Activated CD8-positive, alpha-beta T cell treated with anti-CD3 and anti-CD28 coated beads for 36 hours (primary cell): ENCODE measurements at regions of chr17 and their contacts with region 1.

Region 1: DNA sequence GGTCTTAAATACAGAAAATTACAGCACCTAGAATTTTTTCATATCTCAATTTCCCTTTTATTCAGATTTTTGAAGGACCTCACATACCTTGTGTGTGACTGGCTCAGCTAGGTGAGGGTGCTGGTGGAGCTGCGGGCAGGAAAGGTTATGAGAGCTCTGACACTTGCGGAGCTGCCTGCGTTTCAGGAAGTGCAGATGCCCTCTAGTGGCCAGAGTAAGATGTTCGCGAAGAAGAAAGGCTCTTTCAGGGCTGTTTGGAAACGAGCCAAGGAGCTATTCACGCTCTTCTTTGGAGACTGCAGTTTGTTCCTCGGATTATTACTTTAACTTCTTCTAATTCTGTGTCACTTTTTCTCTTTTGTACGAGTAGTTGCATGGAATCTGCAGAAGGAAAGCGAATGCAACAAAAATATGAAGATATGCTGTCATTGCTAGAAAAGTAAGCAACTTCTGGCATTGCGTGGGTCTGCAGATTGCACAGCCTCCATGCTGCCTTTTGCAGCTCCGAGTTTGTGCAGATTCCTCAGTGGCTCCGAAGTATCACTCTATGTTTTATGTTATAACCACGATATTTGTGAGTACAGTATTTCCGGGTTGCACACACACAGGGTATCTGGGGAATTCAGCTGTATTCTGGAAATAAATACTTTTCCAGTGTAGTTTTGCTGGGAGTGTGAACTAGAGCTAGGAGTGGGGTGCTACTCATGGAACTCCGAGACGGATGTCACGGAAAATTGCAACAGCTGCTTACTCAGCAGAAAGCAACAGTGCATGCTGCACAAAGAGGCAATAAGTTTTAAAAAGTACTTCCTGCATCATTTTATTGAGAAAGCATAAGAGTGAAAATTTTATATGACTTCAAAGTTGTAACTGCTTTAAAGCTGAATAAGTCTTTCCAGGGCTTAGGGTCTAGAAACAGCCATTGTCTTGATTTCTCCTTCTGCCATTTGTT is 46.3 kb downstream of the DNAH9 start:
- DNase-seq: peak; percentile 53
- ATAC-seq: no peak
- H3K4me3 Mint-ChIP-seq: no peak overlapping the region
- H3K27ac Mint-ChIP-seq: no peak overlapping the region
- H3K4me1 Mint-ChIP-seq: no peaks in the 10 kb centered on the region
- H3K27me3 Mint-ChIP-seq: no peaks in the 10 kb centered on the region
- CTCF ChIP-seq: peak; percentile 68

Region 2: GRCh38 chr17:11589716-11590115 is 54.8 kb before region 1 on chr17:
- CTCF ChIA-PET with region 1: no interaction called
- POLR2A ChIA-PET with region 1: no interaction called
- intact Hi-C with region 1: loop called (anchors 10 kb)
- DNase-seq: no peak
- ATAC-seq: no peak
- H3K4me3 Mint-ChIP-seq: no peak overlapping the region
- H3K27ac Mint-ChIP-seq: no peak overlapping the region
- H3K4me1 Mint-ChIP-seq: no peaks in the 10 kb centered on the region
- H3K27me3 Mint-ChIP-seq: no peaks in the 10 kb centered on the region
- CTCF ChIP-seq: no peak

Region 3: GRCh38 chr17:11628374-11628773 is 16.2 kb before region 1 on chr17:
- CTCF ChIA-PET with region 1: interaction called, 11 read pairs
- POLR2A ChIA-PET with region 1: no interaction called
- intact Hi-C with region 1: no loop called
- DNase-seq: no peak
- ATAC-seq: no peak
- H3K4me3 Mint-ChIP-seq: no peak overlapping the region
- H3K27ac Mint-ChIP-seq: no peak overlapping the region
- H3K4me1 Mint-ChIP-seq: no peaks in the 10 kb centered on the region
- H3K27me3 Mint-ChIP-seq: no peaks in the 10 kb centered on the region
- CTCF ChIP-seq: no peak

Region 4: GRCh38 chr17:11768106-11768505 is 123.6 kb after region 1 on chr17:
- CTCF ChIA-PET with region 1: no interaction called
- POLR2A ChIA-PET with region 1: no interaction called
- intact Hi-C with region 1: no loop called
- DNase-seq: no peak
- ATAC-seq: no peak
- H3K4me3 Mint-ChIP-seq: no peak overlapping the region
- H3K27ac Mint-ChIP-seq: no peak overlapping the region
- H3K4me1 Mint-ChIP-seq: no peaks in the 10 kb centered on the region
- H3K27me3 Mint-ChIP-seq: no peaks in the 10 kb centered on the region
- CTCF ChIP-seq: no peak